PC-3 (cell line): ENCODE measurements at regions of chr11 and their contacts with region 1.

Region 1: DNA sequence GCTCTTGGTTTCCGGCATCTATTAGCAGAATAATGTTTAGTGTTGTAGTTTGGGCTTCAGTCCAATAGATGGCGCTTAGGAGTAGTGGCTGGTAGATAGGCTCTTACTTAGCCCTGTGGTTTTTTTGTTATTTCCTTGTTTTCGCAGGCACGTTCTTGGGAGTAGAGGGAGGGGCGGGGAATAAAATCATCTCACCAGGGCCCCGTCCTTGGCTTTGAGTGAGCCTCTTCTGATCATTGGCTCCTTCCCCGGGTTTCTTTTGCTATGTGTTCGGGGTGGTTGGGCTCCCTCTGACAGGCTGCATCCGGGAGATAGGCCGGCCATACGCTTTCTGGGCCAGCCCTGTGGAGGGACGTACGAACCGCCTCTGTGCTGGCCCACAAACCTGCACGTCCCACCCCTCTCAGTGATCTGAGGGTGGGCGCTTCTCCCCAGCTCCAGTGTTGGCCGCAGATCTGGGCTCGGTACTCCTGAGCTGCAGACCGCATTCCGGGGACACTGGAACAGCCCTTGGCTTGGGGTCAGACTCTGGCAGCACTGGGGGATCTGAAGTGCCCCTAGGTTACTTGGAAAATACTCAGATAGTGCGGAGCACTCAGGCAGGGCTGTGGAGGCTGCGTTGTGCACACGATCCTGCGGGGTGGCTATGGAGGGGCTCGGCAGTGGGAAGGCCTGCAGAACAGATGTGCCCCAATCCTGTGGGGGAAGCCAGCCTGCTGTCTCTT is 217.0 kb downstream of the DYNC2H1 start:
- DNase-seq: peak; percentile 92
- ATAC-seq: peak; percentile 97
- H3K4me3 ChIP-seq: no peak overlapping the region
- H3K27ac ChIP-seq: no peak overlapping the region
- H3K4me1 ChIP-seq: no peaks in the 10 kb centered on the region; the same call in 1 of the 2 replicates
- H3K27me3 ChIP-seq: no peaks in the 10 kb centered on the region
- CTCF ChIP-seq: peak; percentile 91

Region 2: DNA sequence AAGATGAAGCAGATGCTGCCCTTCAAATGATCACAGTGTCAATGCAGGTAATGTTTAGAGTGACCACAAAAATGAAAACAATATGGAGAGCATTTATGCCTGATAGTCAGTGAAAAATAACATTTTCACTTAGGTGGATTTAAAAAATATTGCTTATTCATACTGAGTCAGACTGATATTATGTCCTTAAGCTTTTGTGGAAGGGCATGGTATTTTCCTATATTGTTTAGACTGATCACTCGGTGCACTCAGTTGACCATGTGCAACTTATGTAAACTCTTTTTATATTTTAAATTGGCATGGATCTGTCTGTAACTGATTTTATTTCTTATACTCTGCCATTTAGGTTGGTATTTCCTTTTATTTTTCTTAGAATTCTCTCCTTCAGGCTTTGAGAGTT is 110.4 kb before region 1 on chr11:
- CTCF ChIA-PET with region 1: no interaction called
- POLR2A ChIA-PET with region 1: no interaction called
- intact Hi-C with region 1: no loop called
- DNase-seq: peak; percentile 9
- ATAC-seq: peak; percentile 31; the same call in 1 of the 2 replicates
- H3K4me3 ChIP-seq: no peak overlapping the region
- H3K27ac ChIP-seq: no peak overlapping the region
- H3K4me1 ChIP-seq: peaks cover 5% of the 10 kb centered on the region
- H3K27me3 ChIP-seq: no peaks in the 10 kb centered on the region
- CTCF ChIP-seq: no peak

Region 3: DNA sequence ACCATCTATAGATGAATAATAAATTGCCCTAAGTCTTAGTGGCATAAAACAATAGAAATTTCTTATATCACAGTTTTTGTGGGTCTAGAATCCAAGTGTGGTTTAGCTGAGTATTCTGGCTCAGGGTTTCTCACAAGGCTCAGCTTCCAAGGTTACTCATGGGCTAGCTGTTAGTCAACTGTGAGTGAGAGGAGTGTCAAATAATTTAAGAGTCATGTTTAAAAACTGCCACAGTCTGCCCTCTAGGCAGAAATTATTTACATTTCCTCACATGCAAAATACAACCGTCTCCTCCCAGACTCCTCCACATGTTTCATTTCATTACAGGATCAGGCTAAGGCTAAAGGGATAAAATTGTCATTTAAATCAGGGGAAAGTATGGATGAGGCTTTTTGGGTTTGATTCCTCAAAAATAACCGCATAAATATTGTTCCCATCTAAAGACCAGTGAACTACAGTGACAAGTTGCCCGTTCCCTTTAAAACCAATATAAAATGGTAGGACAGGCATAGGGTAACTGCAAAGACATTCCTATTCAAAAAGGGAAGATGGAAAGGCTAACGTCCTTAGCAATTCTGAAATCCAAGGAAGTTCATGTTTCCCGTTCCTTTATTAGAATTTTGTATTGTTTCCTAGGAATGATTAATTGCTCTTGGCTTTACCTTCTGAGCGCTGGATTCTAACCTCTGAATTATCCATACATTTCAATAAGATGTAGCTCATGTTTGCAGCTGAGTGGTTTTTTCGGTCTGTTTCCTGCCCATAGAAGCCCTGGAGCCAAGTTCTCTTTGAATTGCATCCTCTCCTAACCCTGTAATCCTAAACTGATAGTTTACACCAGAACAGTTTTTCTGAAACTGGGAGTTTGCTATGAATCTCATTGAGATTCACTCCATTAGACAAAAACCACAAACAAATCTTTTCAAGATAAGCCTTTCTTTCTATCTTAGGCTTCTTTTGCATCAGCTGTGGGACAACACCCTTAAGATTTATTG is 107.5 kb after region 1 on chr11:
- CTCF ChIA-PET with region 1: no interaction called
- POLR2A ChIA-PET with region 1: no interaction called
- intact Hi-C with region 1: loop called (anchors 5 kb)
- DNase-seq: peak; percentile 96
- ATAC-seq: peak; percentile 99
- H3K4me3 ChIP-seq: no peak overlapping the region
- H3K27ac ChIP-seq: peak overlapping the region; percentile 66
- H3K4me1 ChIP-seq: peaks cover 21% of the 10 kb centered on the region
- H3K27me3 ChIP-seq: no peaks in the 10 kb centered on the region
- CTCF ChIP-seq: peak; percentile 36; the same call in 1 of the 2 replicates

Region 4: DNA sequence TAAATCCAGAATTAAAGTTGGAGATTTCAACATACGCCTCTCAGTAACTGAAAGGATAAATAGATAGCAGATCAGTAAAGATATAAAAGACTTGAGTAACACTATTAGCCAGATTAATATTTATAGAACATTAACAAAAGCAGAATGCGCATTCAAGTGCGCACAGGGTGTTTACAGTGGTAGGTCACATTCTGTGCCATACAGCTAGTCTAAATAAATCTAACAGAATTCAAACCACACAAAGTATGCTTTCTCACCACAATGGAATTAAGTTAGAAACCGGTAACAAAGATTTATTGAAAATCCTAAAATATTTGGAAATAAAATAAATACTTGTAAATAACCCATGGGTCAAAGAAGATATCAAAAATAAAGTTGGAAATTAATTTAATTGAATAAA is 124.0 kb after region 1 on chr11:
- CTCF ChIA-PET with region 1: no interaction called
- POLR2A ChIA-PET with region 1: no interaction called
- intact Hi-C with region 1: loop called (anchors 5 kb)
- DNase-seq: no peak
- ATAC-seq: no peak
- H3K4me3 ChIP-seq: no peak overlapping the region
- H3K27ac ChIP-seq: no peak overlapping the region
- H3K4me1 ChIP-seq: no peaks in the 10 kb centered on the region
- H3K27me3 ChIP-seq: no peaks in the 10 kb centered on the region
- CTCF ChIP-seq: no peak

Region 5: DNA sequence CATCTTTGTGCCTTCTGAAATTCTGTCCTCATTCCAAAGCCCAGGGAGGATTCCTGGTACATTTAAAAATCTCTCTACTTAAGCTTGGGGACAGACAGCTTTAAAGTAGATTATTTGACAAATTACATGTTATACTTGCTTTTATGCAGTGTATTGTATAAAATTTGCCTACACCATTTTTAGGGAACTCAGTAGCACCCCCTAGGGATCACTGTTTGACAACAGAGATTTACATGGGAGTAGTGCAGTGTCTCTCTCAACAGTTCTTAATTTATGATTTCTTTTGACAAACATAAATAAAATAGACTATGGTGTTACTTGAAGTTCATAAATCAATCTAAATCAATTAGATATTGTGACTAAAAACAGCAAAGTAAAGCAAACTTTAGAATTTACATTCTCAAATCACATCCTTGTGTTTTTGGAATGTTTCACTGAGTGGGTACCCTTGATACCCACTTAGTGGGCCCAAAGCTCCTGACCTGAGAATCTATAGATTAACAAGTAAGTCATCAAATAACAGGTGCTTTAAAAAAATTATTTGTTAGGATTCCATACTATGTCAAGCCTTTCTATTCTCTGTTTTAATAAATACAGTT is 211.8 kb after region 1 on chr11:
- CTCF ChIA-PET with region 1: no interaction called
- POLR2A ChIA-PET with region 1: no interaction called
- intact Hi-C with region 1: loop called (anchors 1 kb)
- DNase-seq: peak; percentile 80
- ATAC-seq: peak; percentile 83
- H3K4me3 ChIP-seq: no peak overlapping the region
- H3K27ac ChIP-seq: no peak overlapping the region
- H3K4me1 ChIP-seq: peaks cover 6% of the 10 kb centered on the region
- H3K27me3 ChIP-seq: no peaks in the 10 kb centered on the region
- CTCF ChIP-seq: peak; percentile 95